ENCODE measurements at regions of chr20 and their contacts with region 1.

Region 1: GRCh38 chr20:17995967-17996819 is 27.4 kb downstream of the MGME1 start:
- DNase-seq: peak in 7 of 9 donors; percentile 35 to 68 (median 59)
- ATAC-seq: peak; percentile 94
- H3K4me3 ChIP-seq: no peak overlapping the region
- H3K4me3 Mint-ChIP-seq: no peak overlapping the region
- H3K27ac ChIP-seq: no peak overlapping the region
- H3K27ac Mint-ChIP-seq: peak overlapping the region in 1 of 9 donors; percentile 48
- H3K4me1 ChIP-seq: peaks cover 0 to 8% of the 10 kb centered on the region in 2 donors
- H3K4me1 Mint-ChIP-seq: peaks cover 4 to 45% (median 6%) of the 10 kb centered on the region in 7 donors
- H3K27me3 ChIP-seq: no peaks in the 10 kb centered on the region
- H3K27me3 Mint-ChIP-seq: peaks cover 3 to 13% (median 8%) of the 10 kb centered on the region in 5 donors

Region 2: DNA sequence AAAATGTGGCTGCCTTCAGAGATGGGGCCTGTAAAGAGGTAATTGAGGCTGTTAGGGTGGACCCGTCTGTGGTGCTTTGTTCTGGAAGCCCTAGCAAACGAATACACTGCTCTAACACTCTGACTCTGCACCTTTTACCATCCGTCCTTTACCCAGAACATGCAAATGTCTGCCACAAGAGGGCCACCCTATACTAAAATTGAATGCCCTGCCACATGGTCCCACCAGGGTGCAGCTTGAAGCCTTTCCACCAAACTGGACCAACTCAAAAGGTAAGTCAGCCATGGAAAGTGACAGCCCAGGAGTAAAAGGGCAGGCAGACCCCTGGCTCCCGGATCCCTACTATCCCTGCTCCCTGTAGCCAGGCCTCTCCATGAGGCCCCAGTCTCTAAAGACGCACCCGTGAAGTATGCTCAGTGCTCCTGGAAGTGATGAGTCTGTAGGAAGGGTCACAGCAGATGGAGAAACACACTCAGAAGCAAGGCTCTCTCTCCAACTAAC is 459.2 kb before region 1 on chr20:
- CTCF ChIA-PET with region 1: interaction called, 3 read pairs
- POLR2A ChIA-PET with region 1: no interaction called
- intact Hi-C with region 1: loop called (anchors 1 kb)
- DNase-seq: peak; percentile 22 to 73 (median 65)
- ATAC-seq: peak; percentile 98
- H3K4me3 ChIP-seq: no peak overlapping the region
- H3K4me3 Mint-ChIP-seq: no peak overlapping the region
- H3K27ac ChIP-seq: no peak overlapping the region
- H3K27ac Mint-ChIP-seq: peak overlapping the region in 2 of 9 donors; percentile 50 to 52
- H3K4me1 ChIP-seq: peaks cover 0 to under 1% of the 10 kb centered on the region in 2 donors
- H3K4me1 Mint-ChIP-seq: peaks cover 0 to 39% (median 0%) of the 10 kb centered on the region in 7 donors
- H3K27me3 ChIP-seq: no peaks in the 10 kb centered on the region
- H3K27me3 Mint-ChIP-seq: peaks cover 10 to 30% (median 18%) of the 10 kb centered on the region in 5 donors

Region 3: GRCh38 chr20:17666481-17666880 is 329.7 kb before region 1 on chr20:
- CTCF ChIA-PET with region 1: no interaction called
- POLR2A ChIA-PET with region 1: no interaction called
- intact Hi-C with region 1: loop called in 1 of 2 experiments (anchors 5 kb)
- DNase-seq: no peak
- ATAC-seq: no peak
- H3K4me3 ChIP-seq: no peak overlapping the region
- H3K4me3 Mint-ChIP-seq: peak overlapping the region in 1 of 10 donors; percentile 14
- H3K27ac ChIP-seq: no peak overlapping the region
- H3K27ac Mint-ChIP-seq: no peak overlapping the region
- H3K4me1 ChIP-seq: no peaks in the 10 kb centered on the region
- H3K4me1 Mint-ChIP-seq: peaks cover 13 to 77% (median 33%) of the 10 kb centered on the region in 7 donors
- H3K27me3 ChIP-seq: no peaks in the 10 kb centered on the region
- H3K27me3 Mint-ChIP-seq: no peaks in the 10 kb centered on the region

Region 4: DNA sequence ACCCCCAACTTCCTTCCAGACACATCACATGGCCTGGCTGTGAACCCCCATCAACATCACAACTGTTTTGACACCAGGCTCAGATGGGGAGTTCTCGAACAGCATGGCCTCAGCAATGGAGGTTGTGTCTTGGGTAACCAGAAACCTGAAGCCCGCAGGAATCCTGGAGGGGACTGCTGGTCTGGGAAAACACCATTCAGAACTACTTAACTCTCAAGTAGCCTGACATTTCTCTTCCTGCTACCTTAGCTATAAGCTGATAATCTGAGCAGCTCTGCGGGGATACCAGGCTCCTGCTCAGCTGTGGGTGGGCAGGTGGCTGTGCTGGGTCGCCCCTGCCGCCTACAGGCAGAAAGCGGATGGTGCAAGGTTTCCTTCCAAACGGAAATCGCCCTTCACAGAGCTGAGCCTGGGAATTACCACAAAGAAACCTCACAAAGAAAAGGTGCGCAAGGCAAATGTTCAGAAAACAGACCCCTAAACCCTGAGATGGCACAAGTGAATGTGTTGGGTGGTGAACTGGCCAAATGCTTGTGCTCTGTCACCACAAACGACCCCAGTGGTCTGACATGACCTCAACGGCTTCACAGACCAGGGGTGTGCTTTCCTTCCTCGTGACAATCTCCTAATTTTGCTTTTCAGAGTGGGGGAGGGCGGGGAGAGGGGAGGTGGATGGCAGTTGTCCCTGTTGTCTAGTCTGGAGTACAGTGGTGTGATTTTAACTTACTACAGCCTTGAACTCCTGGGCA is 57.1 kb before region 1 on chr20:
- CTCF ChIA-PET with region 1: interaction called, 6 read pairs
- POLR2A ChIA-PET with region 1: no interaction called
- intact Hi-C with region 1: loop called in 1 of 2 experiments (anchors 10 kb)
- DNase-seq: peak; percentile 18 to 53 (median 34)
- ATAC-seq: peak; percentile 91
- H3K4me3 ChIP-seq: no peak overlapping the region
- H3K4me3 Mint-ChIP-seq: peak overlapping the region in 6 of 10 donors; percentile 4 to 43 (median 37)
- H3K27ac ChIP-seq: no peak overlapping the region
- H3K27ac Mint-ChIP-seq: peak overlapping the region in 4 of 9 donors; percentile 34 to 68 (median 51)
- H3K4me1 ChIP-seq: peaks cover 5 to 9% of the 10 kb centered on the region in 2 donors
- H3K4me1 Mint-ChIP-seq: peaks cover 0 to 22% (median 12%) of the 10 kb centered on the region in 7 donors
- H3K27me3 ChIP-seq: no peaks in the 10 kb centered on the region
- H3K27me3 Mint-ChIP-seq: no peaks in the 10 kb centered on the region

Region 5: GRCh38 chr20:18276821-18277220 is 280.6 kb after region 1 on chr20:
- CTCF ChIA-PET with region 1: no interaction called
- POLR2A ChIA-PET with region 1: no interaction called
- intact Hi-C with region 1: loop called in 1 of 2 experiments (anchors 1 kb)
- DNase-seq: peak in 8 of 9 donors; percentile 12 to 62 (median 36)
- ATAC-seq: peak; percentile 74
- H3K4me3 ChIP-seq: no peak overlapping the region
- H3K4me3 Mint-ChIP-seq: no peak overlapping the region
- H3K27ac ChIP-seq: no peak overlapping the region
- H3K27ac Mint-ChIP-seq: no peak overlapping the region
- H3K4me1 ChIP-seq: no peaks in the 10 kb centered on the region
- H3K4me1 Mint-ChIP-seq: peaks cover 0 to 6% (median 0%) of the 10 kb centered on the region in 7 donors
- H3K27me3 ChIP-seq: peaks cover 2 to 4% of the 10 kb centered on the region in 2 donors
- H3K27me3 Mint-ChIP-seq: peaks cover 43 to 67% (median 50%) of the 10 kb centered on the region in 5 donors